B cell (primary cell): ENCODE measurements at regions of chr14 and their contacts with region 1.

Region 1: DNA sequence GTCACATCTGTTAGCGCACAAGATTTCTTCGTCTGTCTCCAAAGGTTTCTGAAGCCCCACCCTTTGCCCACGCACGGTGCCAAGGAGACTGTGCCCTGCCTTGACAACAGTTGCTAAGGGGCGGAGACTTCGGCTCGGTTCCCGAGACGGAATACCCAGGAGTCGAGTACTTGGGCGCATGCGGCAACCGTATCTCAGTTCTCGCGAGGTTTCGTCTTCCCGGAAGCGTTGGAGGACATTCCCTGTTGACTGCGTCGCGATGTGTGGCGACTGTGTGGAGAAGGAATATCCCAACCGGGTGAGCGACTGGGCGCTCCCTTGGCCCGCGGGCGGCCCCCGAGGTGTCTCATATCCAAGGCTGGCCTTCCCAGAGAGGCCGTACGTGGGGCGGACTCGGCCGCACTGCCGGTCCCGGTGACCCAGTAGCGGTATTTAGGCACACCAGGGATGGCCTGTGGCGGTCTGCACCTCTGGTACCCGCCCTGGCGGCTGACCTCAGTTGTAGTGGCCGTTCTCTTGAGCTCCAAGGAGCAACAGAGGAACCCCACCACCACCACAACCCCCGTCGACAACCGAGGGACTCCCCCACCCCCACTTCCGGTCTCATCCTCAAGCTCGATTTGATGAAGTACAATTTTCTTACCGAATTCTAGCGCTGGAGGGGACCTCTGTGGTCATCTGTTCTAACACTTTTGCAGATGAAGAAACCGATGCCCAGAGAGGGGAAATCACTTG is at the start of gene CHURC1:
- DNase-seq: peak; percentile 98
- ATAC-seq: peak; percentile 97
- H3K4me3 ChIP-seq: peak within 1 kb of the TSS; percentile 88 to 100 (median 96)
- H3K4me3 Mint-ChIP-seq: peak within 1 kb of the TSS; percentile 85
- H3K27ac ChIP-seq: peak within 1 kb of the TSS; percentile 98 to 99
- H3K27ac Mint-ChIP-seq: peak within 1 kb of the TSS; percentile 96
- H3K4me1 ChIP-seq: peaks cover 17 to 24% of the 10 kb centered on the region in 2 donors
- H3K4me1 Mint-ChIP-seq: peaks cover 40% of the 10 kb centered on the region
- H3K27me3 ChIP-seq: peaks cover 0 to 4% (median 0%) of the 10 kb centered on the region in 4 experiments
- H3K27me3 Mint-ChIP-seq: peaks cover 13% of the 10 kb centered on the region
- CTCF ChIP-seq: no peak
- total RNA-seq, gene CHURC1: 67.7 and 77.1 TPM in 2 replicates

Region 2: GRCh38 chr14:64540208-64541157 is 373.9 kb before region 1 on chr14 and contains the start of gene HSPA2:
- CTCF ChIA-PET with region 1: no interaction called
- POLR2A ChIA-PET with region 1: no interaction called
- intact Hi-C with region 1: loop called (anchors 5 kb)
- DNase-seq: peak; percentile 98
- ATAC-seq: peak; percentile 90
- H3K4me3 ChIP-seq: peak within 1 kb of the TSS; percentile 74 to 98 (median 85)
- H3K4me3 Mint-ChIP-seq: peak within 1 kb of the TSS; percentile 100
- H3K27ac ChIP-seq: peak within 1 kb of the TSS; percentile 60 to 67
- H3K27ac Mint-ChIP-seq: peak within 1 kb of the TSS; percentile 97
- H3K4me1 ChIP-seq: peaks cover 26 to 32% of the 10 kb centered on the region in 2 donors
- H3K4me1 Mint-ChIP-seq: peaks cover 31% of the 10 kb centered on the region
- H3K27me3 ChIP-seq: peaks cover 0 to 19% (median 5%) of the 10 kb centered on the region in 4 experiments
- H3K27me3 Mint-ChIP-seq: peaks cover 5% of the 10 kb centered on the region
- CTCF ChIP-seq: peak; percentile 78
- total RNA-seq, gene HSPA2: 14.9 and 19.6 TPM in 2 replicates

Region 3: DNA sequence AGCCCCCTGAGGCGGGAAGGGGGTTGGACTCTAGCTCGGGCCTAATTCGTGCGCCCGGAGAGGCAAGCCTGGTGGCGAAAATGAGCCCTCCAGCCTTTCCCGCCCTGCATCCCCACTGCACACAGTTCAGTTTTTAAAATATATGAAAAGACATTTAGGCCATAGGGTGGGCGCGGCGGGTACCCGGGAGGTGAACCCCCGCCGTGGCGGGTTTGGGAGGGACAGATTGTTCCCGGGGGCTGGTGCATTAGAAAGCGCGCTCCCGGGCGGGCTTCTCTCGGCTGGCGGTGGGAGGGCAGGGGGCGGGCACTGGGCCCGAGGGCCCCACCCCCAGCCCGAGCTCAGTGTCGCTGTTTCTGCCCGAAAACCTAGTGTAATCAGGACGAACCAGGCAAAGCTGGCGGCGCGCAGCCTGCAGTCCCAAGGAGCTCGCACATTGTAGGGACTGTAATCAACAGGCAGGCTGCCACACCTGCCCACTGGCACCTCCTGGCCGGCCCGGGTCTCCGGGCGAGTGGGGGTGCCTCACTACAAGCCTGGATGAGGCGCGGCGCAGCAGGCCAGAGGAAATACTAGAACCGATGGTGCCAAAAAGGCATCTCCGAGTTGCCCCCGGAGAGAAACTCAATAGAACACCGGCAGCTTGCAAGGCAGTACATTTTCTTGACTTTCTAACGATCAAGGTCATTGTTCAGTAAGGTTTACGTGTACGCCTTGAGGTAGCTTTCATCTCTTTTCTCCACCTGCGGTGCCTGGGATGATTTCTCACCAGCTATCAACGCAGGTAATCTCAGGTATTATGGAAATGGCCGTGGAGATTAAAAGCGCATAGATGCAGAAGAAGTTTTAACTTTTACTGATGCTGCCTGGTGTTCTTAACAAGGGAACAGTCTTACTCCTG is 33.9 kb before region 1 on chr14:
- CTCF ChIA-PET with region 1: no interaction called
- POLR2A ChIA-PET with region 1: no interaction called
- intact Hi-C with region 1: loop called (anchors 2 kb)
- DNase-seq: peak; percentile 63
- ATAC-seq: peak; percentile 76
- H3K4me3 ChIP-seq: peak overlapping the region; percentile 16 to 65 (median 51)
- H3K4me3 Mint-ChIP-seq: peak overlapping the region; percentile 87
- H3K27ac ChIP-seq: no peak overlapping the region
- H3K27ac Mint-ChIP-seq: no peak overlapping the region
- H3K4me1 ChIP-seq: peaks cover 7 to 13% of the 10 kb centered on the region in 2 donors
- H3K4me1 Mint-ChIP-seq: peaks cover 12% of the 10 kb centered on the region
- H3K27me3 ChIP-seq: peaks cover 0 to 48% (median 35%) of the 10 kb centered on the region in 4 experiments
- H3K27me3 Mint-ChIP-seq: peaks cover 69% of the 10 kb centered on the region
- CTCF ChIP-seq: no peak

Region 4: GRCh38 chr14:64899958-64900357 is 14.4 kb before region 1 on chr14:
- CTCF ChIA-PET with region 1: no interaction called
- POLR2A ChIA-PET with region 1: no interaction called
- intact Hi-C with region 1: no loop called
- DNase-seq: no peak
- ATAC-seq: no peak
- H3K4me3 ChIP-seq: no peak overlapping the region
- H3K4me3 Mint-ChIP-seq: no peak overlapping the region
- H3K27ac ChIP-seq: no peak overlapping the region
- H3K27ac Mint-ChIP-seq: no peak overlapping the region
- H3K4me1 ChIP-seq: no peaks in the 10 kb centered on the region
- H3K4me1 Mint-ChIP-seq: no peaks in the 10 kb centered on the region
- H3K27me3 ChIP-seq: no peaks in the 10 kb centered on the region
- H3K27me3 Mint-ChIP-seq: peaks cover 42% of the 10 kb centered on the region
- CTCF ChIP-seq: no peak

Region 5: DNA sequence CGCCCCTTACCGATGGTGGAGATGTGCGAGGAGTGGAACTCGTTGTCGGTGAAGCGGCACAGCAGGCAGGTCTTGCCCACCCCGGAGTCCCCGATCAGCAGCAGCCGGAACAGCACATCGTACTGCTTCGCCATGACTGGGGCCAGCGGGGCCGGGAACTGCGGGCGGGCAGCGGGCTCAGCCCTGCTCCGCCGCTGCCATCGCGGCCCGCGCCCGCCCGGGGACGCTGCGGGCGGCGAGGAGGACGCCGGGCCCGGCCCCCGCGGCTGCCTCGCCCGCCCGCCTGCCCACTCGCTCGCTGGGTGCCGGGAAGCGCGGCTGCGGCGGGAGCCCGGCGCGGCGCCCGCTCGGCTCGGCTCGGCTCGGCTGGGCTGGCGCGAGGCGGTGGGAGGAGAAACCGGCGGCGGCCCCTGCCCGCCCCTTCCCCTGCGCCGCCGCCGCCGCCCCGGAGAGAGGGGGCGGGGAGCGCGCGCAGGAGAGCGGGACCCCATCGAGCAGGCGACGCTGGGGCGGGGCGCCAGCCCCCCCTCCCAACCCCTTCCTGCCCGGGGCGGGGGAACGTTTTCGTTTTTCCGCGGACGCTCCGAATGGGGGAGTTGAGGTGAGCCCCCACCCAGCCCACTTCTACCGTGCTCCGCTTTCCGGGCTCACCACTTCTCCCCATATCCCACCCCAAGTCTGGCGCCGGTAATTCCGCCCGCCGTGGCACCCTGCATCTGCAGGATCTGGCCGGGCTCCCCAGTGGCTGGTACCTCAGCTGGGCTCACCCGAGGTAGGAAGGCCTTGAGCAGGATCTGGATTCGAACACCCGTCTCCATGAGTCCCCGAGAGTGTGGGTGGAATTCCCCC is 57.8 kb after region 1 on chr14 and contains the start of gene RAB15:
- CTCF ChIA-PET with region 1: no interaction called
- POLR2A ChIA-PET with region 1: no interaction called
- intact Hi-C with region 1: loop called (anchors 5 kb)
- DNase-seq: peak; percentile 50
- ATAC-seq: peak; percentile 71
- H3K4me3 ChIP-seq: peak within 1 kb of the TSS in 4 of 5 experiments; percentile 44 to 65 (median 62)
- H3K4me3 Mint-ChIP-seq: peak within 1 kb of the TSS; percentile 83
- H3K27ac ChIP-seq: no peak within 1 kb of the TSS
- H3K27ac Mint-ChIP-seq: no peak within 1 kb of the TSS
- H3K4me1 ChIP-seq: peaks cover 11% of the 10 kb centered on the region in 2 donors
- H3K4me1 Mint-ChIP-seq: peaks cover 6% of the 10 kb centered on the region
- H3K27me3 ChIP-seq: peaks cover 0 to 27% (median 9%) of the 10 kb centered on the region in 4 experiments
- H3K27me3 Mint-ChIP-seq: peaks cover 19% of the 10 kb centered on the region
- CTCF ChIP-seq: no peak
- total RNA-seq, gene RAB15: 0.17 and 0.32 TPM in 2 replicates

Region 6: GRCh38 chr14:65102441-65103149 is 188.2 kb after region 1 on chr14 and contains the start of gene MAX:
- CTCF ChIA-PET with region 1: no interaction called
- POLR2A ChIA-PET with region 1: no interaction called
- intact Hi-C with region 1: loop called (anchors 2 kb)
- DNase-seq: peak; percentile 98
- ATAC-seq: peak; percentile 85
- H3K4me3 ChIP-seq: peak within 1 kb of the TSS; percentile 62 to 97 (median 93)
- H3K4me3 Mint-ChIP-seq: peak within 1 kb of the TSS; percentile 91
- H3K27ac ChIP-seq: peak within 1 kb of the TSS; percentile 95 to 97
- H3K27ac Mint-ChIP-seq: peak within 1 kb of the TSS; percentile 97
- H3K4me1 ChIP-seq: peaks cover 23 to 30% of the 10 kb centered on the region in 2 donors
- H3K4me1 Mint-ChIP-seq: peaks cover 38% of the 10 kb centered on the region
- H3K27me3 ChIP-seq: no peaks in the 10 kb centered on the region
- H3K27me3 Mint-ChIP-seq: no peaks in the 10 kb centered on the region
- CTCF ChIP-seq: no peak
- total RNA-seq, gene MAX: 127 and 130 TPM in 2 replicates